ENCODE measurements at regions of chr1 and their contacts with region 1.

Region 1: DNA sequence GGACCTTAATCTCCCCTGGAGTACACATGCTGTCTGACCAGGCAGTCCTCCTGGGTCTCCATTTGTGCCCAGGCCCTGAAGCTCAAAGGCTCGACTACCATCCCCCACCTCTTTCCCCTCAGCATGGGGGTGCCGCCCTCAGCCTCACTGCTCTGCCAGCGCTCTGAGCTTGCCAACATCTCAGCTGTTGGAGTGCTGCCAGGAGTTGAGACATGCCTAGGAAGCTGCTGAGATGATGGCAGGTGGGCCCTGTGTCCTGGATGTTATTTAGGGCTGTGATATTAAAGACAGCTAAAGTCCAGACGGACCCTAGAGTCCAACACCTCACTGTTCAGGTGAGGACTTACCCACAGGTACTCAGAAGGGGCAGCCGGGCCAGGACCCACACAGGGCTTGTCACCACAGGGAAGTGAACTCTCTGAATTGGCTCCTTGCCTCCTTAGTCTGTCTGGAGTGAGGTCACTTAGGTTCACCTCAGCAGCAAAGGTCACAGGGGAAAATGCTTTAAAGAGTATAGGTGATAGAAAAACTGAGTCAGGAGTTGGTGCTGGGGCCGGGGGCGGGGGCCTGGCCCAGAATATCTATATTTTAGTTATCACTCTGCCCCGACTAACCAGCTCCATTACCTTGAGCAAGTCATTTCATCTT is 19.7 kb upstream of the KCNC4 start:
- DNase-seq: no peak
- H3K4me3 Mint-ChIP-seq: no peak overlapping the region
- H3K27ac Mint-ChIP-seq: no peak overlapping the region
- H3K4me1 Mint-ChIP-seq: peaks cover 2% of the 10 kb centered on the region
- H3K27me3 Mint-ChIP-seq: no peaks in the 10 kb centered on the region

Region 2: DNA sequence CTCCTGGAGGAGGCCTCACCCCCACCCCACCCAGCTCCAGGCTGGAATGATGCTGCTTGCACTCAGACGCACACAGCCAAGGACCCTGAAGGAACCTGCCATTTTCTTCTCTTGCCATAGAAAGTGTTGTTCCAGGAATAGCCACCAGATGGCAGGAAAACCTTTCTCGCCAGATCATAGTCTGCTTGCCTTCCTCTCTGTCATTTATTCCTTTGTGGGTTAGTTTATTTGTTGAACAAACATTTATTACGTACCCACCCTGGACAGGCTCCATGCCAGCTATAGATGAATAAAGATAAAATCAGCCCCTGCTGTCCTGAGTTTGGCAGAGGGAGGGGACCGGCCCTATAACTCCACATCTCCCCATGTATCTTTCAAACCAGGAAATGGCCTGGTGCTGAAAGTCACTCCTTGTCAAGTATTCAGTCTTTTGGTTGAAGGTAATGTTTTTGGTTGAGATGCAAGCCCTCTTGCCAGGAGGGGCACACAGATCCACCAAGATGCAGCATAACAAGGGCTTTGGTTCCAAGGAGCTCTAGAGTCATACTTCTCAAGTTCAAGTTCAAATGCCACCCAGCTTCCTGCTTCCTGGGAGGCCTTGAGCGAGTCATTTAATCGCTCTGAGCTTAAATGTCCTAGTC is 12.7 kb after region 1 on chr1:
- CTCF ChIA-PET with region 1: interaction called, 22 read pairs
- POLR2A ChIA-PET with region 1: no interaction called
- intact Hi-C with region 1: no loop called
- DNase-seq: peak; percentile 73
- H3K4me3 Mint-ChIP-seq: no peak overlapping the region
- H3K27ac Mint-ChIP-seq: peak overlapping the region; percentile 83
- H3K4me1 Mint-ChIP-seq: peaks cover 15% of the 10 kb centered on the region
- H3K27me3 Mint-ChIP-seq: no peaks in the 10 kb centered on the region